PC-9 (cell line): ENCODE measurements at regions of chr3 and their contacts with region 1.

Region 1: GRCh38 chr3:99638167-99638948 is at the start of gene COL8A1:
- DNase-seq: peak in 1 of 2 experiments; percentile 72
- H3K4me3 ChIP-seq: peak within 1 kb of the TSS; percentile 48
- H3K27ac ChIP-seq: peak within 1 kb of the TSS; percentile 35
- H3K4me1 ChIP-seq: peaks cover 19% of the 10 kb centered on the region
- H3K27me3 ChIP-seq: peaks cover 6% of the 10 kb centered on the region; the same call in 1 of the 2 replicates
- CTCF ChIP-seq: no peak
- total RNA-seq, gene COL8A1: 6.6 and 8.1 TPM in 2 replicates

Region 2: GRCh38 chr3:99128725-99129505 is 509.4 kb before region 1 on chr3:
- CTCF ChIA-PET with region 1: no interaction called
- POLR2A ChIA-PET with region 1: interaction called, 16 read pairs
- intact Hi-C with region 1: no loop called
- DNase-seq: peak; percentile 56 to 93
- H3K4me3 ChIP-seq: no peak overlapping the region
- H3K27ac ChIP-seq: peak overlapping the region; percentile 88
- H3K4me1 ChIP-seq: peaks cover 28% of the 10 kb centered on the region
- H3K27me3 ChIP-seq: no peaks in the 10 kb centered on the region
- CTCF ChIP-seq: no peak

Region 3: GRCh38 chr3:99458013-99458412 is 180.3 kb before region 1 on chr3:
- CTCF ChIA-PET with region 1: no interaction called
- POLR2A ChIA-PET with region 1: no interaction called
- intact Hi-C with region 1: no loop called
- DNase-seq: no peak
- H3K4me3 ChIP-seq: no peak overlapping the region
- H3K27ac ChIP-seq: no peak overlapping the region
- H3K4me1 ChIP-seq: no peaks in the 10 kb centered on the region
- H3K27me3 ChIP-seq: no peaks in the 10 kb centered on the region
- CTCF ChIP-seq: no peak

Region 4: DNA sequence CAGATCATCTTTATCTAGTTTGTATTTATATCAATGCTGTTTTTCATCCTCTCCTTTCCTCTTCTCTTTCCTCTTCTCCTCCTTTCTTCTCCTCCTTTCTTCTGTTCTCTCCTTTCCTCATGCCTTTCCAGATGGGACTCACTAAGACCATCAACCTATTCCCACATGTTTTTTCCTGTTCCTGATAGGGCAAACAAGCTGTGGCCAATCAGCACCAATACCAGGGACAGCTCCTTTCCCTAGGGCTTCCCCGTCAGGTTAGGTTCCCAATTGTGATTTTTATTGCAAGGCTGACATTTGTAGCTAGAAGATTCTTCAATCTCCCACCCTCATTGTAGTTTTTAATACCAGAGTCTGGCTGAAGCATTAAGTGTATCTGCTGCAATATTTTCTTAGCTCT is 76.2 kb before region 1 on chr3:
- CTCF ChIA-PET with region 1: interaction called, 4 read pairs
- POLR2A ChIA-PET with region 1: no interaction called
- intact Hi-C with region 1: loop called (anchors 5 kb)
- DNase-seq: no peak
- H3K4me3 ChIP-seq: no peak overlapping the region
- H3K27ac ChIP-seq: no peak overlapping the region
- H3K4me1 ChIP-seq: no peaks in the 10 kb centered on the region
- H3K27me3 ChIP-seq: no peaks in the 10 kb centered on the region
- CTCF ChIP-seq: no peak

Region 5: DNA sequence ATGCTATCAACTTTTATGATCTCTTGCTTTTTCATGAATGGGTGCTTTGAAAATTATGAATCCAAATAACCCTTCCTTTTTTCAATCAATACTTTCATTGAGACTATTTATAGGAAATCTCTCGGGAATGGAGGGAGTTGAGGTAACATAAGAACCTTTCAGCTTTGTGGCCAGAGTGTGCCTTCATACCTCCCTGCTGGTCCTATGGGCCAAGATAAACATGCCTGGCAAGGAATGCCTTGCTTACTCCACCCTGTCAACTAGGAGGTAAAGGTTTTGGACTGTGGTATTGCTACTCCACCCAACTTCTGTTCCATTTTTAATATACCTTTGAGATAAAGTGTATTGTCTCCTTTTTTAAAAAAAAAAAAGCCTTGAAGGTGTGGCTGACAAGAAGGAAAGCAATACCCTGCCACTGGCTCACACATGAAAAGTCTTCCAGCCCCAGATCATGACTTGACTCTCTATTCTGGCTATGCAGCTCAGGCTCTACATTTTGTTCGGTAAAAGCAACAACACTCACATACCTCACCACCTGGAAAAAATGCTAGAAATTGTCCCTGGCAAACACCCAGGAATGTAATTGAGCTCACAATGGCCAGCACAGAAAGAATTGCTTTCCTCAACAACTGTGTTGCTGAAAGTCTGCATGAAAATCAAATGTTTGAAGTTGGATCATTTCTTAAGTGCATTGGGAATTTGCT is 35.9 kb after region 1 on chr3:
- CTCF ChIA-PET with region 1: no interaction called
- POLR2A ChIA-PET with region 1: no interaction called
- intact Hi-C with region 1: loop called (anchors 2 kb)
- DNase-seq: peak in 1 of 2 experiments; percentile 64
- H3K4me3 ChIP-seq: no peak overlapping the region
- H3K27ac ChIP-seq: no peak overlapping the region
- H3K4me1 ChIP-seq: no peaks in the 10 kb centered on the region
- H3K27me3 ChIP-seq: no peaks in the 10 kb centered on the region
- CTCF ChIP-seq: no peak

Region 6: GRCh38 chr3:99789011-99789721 is 150.8 kb after region 1 on chr3:
- CTCF ChIA-PET with region 1: interaction called, 22 read pairs
- POLR2A ChIA-PET with region 1: no interaction called
- intact Hi-C with region 1: no loop called
- DNase-seq: peak; percentile 34 to 46
- H3K4me3 ChIP-seq: no peak overlapping the region
- H3K27ac ChIP-seq: no peak overlapping the region
- H3K4me1 ChIP-seq: no peaks in the 10 kb centered on the region
- H3K27me3 ChIP-seq: no peaks in the 10 kb centered on the region
- CTCF ChIP-seq: peak; percentile 89